ENCODE measurements at regions of chr6 and their contacts with region 1.

Region 1: DNA sequence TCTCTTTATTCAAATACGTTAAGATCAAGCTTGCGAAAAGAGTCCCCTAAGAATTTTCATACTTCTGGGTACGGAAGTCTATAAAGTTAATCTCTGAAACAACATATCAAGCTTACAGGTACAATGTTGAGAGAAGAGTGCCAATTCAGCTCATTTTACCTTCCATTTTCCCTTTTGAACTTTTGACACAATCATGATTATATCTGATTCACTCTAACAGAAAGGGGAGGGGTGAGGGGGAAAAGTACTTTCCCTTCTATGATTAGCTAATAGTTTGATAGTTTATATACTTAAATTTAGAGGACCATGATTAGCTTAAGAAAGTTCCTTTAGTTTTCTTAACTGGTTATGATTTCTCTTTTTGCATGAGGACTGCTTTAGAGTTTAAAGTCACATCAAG is 33.5 kb downstream of the SNX3 start:
- H3K4me3 ChIP-seq: no peak overlapping the region
- H3K27ac ChIP-seq: no peak overlapping the region
- H3K4me1 ChIP-seq: peaks cover 7% of the 10 kb centered on the region; the same call in 1 of the 2 replicates
- CTCF ChIP-seq: no peak

Region 2: DNA sequence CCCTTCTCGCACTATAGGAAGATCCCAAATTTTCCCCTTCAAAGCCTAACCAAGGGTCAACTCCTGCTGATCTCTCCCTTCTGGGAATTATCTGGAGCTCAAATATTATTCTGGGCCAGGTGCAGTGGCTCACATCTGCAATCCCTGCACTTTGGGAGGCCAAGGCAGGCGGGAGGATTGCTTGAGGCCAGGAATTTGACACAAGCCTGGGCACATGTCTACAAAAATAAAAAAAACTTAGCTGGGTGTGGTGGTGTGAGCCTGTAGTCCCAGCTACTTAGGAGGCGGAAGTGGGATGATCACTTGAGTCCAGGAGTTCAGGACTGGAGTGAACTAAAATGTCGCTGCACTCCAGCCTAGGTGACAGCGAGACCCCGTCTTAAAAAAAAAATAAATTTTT is 11.7 kb before region 1 on chr6:
- CTCF ChIA-PET with region 1: interaction called, 10 read pairs
- POLR2A ChIA-PET with region 1: no interaction called
- H3K4me3 ChIP-seq: no peak overlapping the region
- H3K27ac ChIP-seq: no peak overlapping the region
- H3K4me1 ChIP-seq: no peaks in the 10 kb centered on the region
- CTCF ChIP-seq: no peak

Measured in HEK293 (cell line).